ENCODE measurements at regions of chr10 and their contacts with region 1.

Region 1: DNA sequence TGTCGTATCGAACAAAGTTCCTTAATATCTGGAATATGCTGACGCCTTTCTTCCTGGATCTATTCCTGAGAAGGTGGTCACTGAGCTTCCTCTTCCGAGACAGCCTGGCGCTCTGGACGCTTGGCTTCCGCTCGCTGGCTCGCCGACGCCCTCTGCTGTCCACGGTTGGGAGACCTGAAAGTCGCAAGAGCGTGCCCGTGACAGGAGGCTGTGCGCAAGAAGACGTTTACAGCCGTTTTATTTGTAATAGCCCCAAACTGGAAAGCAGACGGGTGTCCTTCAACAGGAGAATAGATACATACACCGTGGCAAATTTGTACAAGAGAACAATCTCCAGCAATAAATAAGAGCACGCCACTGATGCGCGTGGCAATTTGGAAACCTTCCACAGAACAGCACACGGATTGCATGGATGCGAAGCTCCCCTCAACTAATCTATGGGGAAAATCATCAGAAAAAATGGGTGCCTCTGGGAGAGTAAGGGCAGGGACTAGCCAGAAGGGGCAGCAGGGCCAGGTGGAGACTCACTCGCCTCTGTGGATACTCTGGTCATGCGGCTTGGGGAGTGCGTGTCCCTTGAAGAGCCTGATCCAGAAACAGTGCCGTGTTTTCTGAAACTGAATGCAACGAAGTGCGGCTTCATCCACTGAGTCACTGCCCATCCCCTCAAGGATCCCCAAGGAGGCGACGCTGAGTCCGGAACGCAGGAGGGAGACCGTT is 41.5 kb upstream of the BNIP3 start:
- DNase-seq: peak; percentile 86
- CTCF ChIP-seq: peak; percentile 97

Region 2: DNA sequence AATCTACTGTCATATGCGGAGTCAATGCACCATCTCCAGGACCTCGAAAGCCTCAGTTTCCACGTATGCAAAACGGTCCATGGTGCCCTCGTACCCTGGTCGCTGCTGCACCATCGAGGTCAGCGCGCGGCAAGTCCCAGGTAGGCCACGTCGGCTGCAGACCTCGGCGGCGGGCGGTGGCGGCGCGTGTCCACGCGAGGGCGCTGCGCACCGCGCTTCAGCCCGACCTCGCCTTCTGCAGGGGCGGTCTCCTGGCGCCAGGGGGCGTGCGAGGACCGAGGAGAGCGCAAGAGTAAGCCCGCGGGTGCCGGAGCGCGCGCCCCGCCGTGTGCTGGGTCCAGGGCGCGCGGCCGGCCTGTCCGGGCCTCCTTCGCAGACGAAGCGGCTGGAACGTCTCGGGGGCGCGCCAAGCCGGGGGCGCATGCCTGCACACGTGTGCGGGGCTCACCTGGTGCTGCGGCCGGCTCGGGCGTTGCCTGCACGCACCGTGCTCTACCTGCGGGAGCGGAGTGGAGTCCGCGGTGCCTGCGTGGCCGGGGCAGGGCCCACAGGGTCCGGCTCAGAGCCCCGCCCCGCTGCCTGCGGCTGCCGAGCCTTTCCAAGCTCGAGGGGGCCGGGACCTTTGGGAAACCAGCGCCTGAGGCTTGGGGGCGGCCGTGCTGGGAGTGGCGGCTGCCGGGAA is 1833.1 kb before region 1 on chr10:
- in situ Hi-C with region 1: loop called (anchors 25 kb)
- DNase-seq: peak; percentile 97
- CTCF ChIP-seq: peak; percentile 100

Region 3: DNA sequence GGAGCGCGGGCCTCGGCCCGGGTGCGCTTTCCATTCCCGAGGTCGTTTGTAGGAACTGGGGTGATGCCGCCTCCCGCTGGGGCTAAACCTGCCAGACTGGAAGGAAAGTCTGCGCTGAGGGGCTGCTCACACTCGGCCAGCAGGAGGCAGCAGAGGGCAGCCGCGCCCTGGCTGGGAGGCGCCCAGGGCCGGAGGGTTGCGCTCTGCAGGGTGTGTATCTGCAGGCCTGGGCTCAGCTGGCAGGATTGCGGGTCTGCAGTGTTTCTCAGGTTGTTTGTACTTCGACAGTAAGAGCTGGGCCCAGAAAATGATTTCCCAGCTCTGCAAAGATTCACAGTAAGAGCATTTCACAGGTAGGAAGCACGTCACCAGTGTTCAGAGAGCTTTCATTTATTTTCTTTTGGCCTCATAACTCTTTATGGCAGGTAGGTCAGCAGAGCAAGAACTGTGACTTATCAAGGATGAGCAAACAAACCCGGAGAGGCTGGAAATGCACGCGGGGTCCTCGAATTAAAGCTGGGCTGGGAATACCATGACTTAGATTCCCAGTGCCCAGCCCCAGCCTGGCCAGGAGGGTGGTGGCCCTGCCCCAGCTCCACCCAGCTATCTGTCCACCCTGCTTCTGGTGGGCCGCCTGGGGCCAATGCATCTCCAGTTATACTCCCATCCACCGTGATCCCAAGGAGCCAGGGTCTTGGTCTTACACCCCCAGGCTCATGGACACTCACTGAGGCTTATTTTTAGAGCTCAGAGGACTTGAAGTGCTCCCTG is 137.7 kb before region 1 on chr10:
- in situ Hi-C with region 1: loop called (anchors 5 kb)
- DNase-seq: peak; percentile 88
- CTCF ChIP-seq: peak; percentile 99

Region 4: DNA sequence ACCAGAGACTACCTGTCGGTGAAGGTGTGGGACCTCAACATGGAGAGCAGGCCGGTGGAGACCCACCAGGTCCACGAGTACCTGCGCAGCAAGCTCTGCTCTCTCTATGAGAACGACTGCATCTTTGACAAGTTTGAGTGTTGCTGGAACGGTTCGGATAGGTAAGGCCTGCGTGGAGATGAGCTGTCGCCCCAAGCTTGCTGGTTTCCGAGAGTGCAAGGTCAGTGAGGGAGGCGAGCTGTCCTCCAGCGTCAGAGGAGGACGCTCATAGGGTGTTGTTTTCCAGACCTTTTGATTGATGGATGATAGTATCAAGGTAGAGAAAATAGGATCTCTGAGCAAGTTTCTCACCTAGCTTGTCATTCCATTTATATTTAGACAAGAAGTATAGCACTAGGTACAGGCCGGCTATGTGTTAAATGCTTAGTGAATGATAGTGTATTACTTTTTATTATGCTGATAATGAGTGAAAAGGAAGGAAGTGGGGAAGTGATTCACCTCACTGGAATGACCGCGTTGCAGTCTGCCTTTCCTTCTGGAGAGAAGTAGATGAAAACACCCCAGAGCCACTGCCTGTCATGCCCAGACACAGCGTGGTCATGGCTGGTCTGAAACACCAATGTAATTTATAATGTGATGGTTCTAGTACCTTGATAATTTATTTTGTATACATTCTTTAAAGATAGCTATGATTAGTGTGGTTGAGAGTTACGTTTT is 75.5 kb before region 1 on chr10:
- in situ Hi-C with region 1: no loop called
- DNase-seq: no peak
- CTCF ChIP-seq: no peak

Measured in GM13977 (cell line).